ENCODE measurements at regions of chr11 and their contacts with region 1.

Region 1: GRCh38 chr11:3123761-3124733 is 41.1 kb downstream of the OSBPL5 start:
- DNase-seq: peak; percentile 92 to 96
- ATAC-seq: peak; percentile 86
- H3K4me3 ChIP-seq: no peak overlapping the region
- H3K27ac ChIP-seq: peak overlapping the region; percentile 6 to 73
- H3K4me1 ChIP-seq: no peaks in the 10 kb centered on the region
- H3K27me3 ChIP-seq: no peaks in the 10 kb centered on the region

Region 2: GRCh38 chr11:3160252-3161031 is 36.4 kb after region 1 on chr11:
- intact Hi-C with region 1: loop called (anchors 2 to 5 kb)
- DNase-seq: peak; percentile 94 to 96
- ATAC-seq: peak; percentile 89
- H3K4me3 ChIP-seq: peak overlapping the region; percentile 10 to 46
- H3K27ac ChIP-seq: peak overlapping the region; percentile 57 to 76
- H3K4me1 ChIP-seq: no peaks in the 10 kb centered on the region
- H3K27me3 ChIP-seq: no peaks in the 10 kb centered on the region

Region 3: GRCh38 chr11:3177931-3178330 is 53.9 kb after region 1 on chr11:
- intact Hi-C with region 1: no loop called
- DNase-seq: no peak
- ATAC-seq: no peak
- H3K4me3 ChIP-seq: no peak overlapping the region
- H3K27ac ChIP-seq: no peak overlapping the region
- H3K4me1 ChIP-seq: no peaks in the 10 kb centered on the region
- H3K27me3 ChIP-seq: no peaks in the 10 kb centered on the region

Region 4: GRCh38 chr11:3189196-3189843 is 65.3 kb after region 1 on chr11:
- intact Hi-C with region 1: no loop called
- DNase-seq: peak in 1 of 2 donors; percentile 26
- ATAC-seq: no peak
- H3K4me3 ChIP-seq: no peak overlapping the region
- H3K27ac ChIP-seq: no peak overlapping the region
- H3K4me1 ChIP-seq: no peaks in the 10 kb centered on the region
- H3K27me3 ChIP-seq: no peaks in the 10 kb centered on the region

Measured in aorta (tissue), 5 donors.